ENCODE measurements at regions of chr19 and their contacts with region 1.

Region 1: DNA sequence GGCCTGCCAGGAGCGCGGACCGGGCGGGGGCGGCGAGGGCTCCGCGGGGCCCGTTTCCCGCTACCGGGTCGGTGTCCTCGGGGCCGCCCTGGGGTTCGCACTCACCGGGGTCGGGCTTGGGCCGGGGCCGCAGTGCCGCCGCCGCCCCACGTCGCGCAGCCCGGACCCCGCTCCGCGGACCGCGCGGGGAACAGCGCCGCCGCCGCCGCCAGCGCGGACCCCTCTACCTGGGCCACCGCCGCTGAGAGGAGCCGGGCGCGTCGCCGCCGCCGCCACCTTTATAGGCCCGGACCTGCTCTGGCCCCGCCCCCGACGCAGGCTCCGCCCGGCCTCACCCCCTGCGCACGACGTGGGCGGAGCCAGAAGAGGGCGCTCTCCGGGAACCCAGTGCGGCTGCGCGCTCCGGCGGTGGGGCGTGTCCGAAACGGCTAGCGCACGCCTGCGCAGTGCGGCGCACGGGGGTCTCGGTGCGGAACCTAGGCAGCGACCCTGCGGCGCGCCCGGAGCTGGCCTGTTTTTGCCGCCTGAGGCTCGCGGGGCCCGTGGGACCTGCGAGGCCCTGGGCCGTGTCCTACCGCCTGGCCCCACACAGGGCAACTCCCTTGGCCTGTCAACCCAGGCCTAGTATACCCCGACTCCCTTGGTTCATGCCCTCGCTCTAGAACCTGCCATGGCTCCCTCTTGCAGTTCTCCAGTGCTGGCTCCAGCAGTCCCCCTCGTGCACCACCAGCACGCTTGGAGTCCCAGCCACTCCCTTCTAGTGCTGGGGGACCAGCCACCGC is at the start of gene MKNK2:
- DNase-seq: peak; percentile 64
- ATAC-seq: peak; percentile 47
- H3K4me3 ChIP-seq: peak within 1 kb of the TSS; percentile 92 to 94 (median 93)
- H3K27ac ChIP-seq: peak within 1 kb of the TSS; percentile 63
- H3K4me1 ChIP-seq: peaks cover 79% of the 10 kb centered on the region
- H3K27me3 ChIP-seq: no peaks in the 10 kb centered on the region
- CTCF ChIP-seq: peak; percentile 88
- EP300 ChIP-seq: no peak
- POLR2A ChIP-seq: peak; percentile 95 to 98
- RAD21 ChIP-seq: peak; percentile 71
- total RNA-seq, gene MKNK2: 35.5 and 44.9 TPM in 2 replicates

Region 2: GRCh38 chr19:2032296-2032941 is 18.8 kb before region 1 on chr19:
- CTCF ChIA-PET with region 1: no interaction called
- POLR2A ChIA-PET with region 1: interaction called, 11 read pairs
- in situ Hi-C with region 1: no loop called
- intact Hi-C with region 1: no loop called
- DNase-seq: no peak
- ATAC-seq: peak; percentile 20; the same call in 2 of the 3 replicates
- H3K4me3 ChIP-seq: peak overlapping the region in 2 of 3 experiments; percentile 26 to 44; a peak in 1 of 6 replicates
- H3K27ac ChIP-seq: no peak overlapping the region
- H3K4me1 ChIP-seq: peaks cover 14% of the 10 kb centered on the region
- H3K27me3 ChIP-seq: peaks cover 0 to 9% of the 10 kb centered on the region in 2 experiments; a peak in 2 of 5 replicates
- CTCF ChIP-seq: no peak
- EP300 ChIP-seq: no peak
- POLR2A ChIP-seq: no peak
- RAD21 ChIP-seq: no peak

Region 3: GRCh38 chr19:2076526-2076981 is 25.4 kb after region 1 on chr19:
- CTCF ChIA-PET with region 1: no interaction called
- POLR2A ChIA-PET with region 1: no interaction called
- in situ Hi-C with region 1: no loop called
- intact Hi-C with region 1: no loop called
- DNase-seq: no peak
- ATAC-seq: no peak
- H3K4me3 ChIP-seq: no peak overlapping the region
- H3K27ac ChIP-seq: no peak overlapping the region
- H3K4me1 ChIP-seq: no peaks in the 10 kb centered on the region
- H3K27me3 ChIP-seq: no peaks in the 10 kb centered on the region
- CTCF ChIP-seq: no peak
- EP300 ChIP-seq: no peak
- POLR2A ChIP-seq: no peak
- RAD21 ChIP-seq: no peak

Region 4: DNA sequence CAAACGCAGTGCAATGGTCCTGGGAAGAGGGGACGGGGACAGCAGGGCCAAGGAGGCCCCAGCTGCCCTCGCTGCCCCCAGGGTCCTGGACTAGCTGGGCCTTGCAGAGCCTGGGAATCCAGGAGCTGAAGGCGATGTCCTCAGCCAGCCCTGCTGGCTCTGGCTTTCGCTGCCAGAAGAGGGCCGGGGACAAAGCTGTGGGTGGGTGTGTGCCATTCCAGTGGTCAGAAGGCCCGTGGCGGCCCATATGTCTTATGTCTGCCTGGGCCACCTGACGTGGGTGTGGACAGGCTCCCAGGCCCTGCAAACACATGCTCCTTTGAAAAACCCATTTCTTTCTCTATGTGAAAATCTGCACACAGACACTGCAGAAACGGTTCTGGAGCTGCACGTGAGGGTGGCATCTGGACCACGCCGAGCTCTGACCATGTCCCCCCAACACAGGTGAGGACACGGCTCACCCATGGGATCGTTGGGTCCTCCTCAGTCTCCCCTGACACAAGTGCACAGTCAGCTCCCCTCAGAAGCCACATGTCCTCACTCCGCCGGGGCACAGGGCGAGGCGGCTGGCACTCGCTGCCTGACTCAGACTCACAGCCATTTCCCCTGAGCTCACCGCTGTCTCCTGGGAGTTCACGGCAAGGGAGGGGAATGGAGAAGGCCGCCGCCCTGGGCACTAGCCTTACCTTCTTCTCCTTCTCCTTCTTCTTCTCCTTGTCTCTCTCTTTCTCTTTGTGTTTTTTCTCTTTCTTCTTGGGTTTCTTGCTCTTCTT is 62.4 kb after region 1 on chr19:
- CTCF ChIA-PET with region 1: no interaction called
- POLR2A ChIA-PET with region 1: no interaction called
- in situ Hi-C with region 1: no loop called
- intact Hi-C with region 1: no loop called
- DNase-seq: no peak
- ATAC-seq: no peak
- H3K4me3 ChIP-seq: no peak overlapping the region
- H3K27ac ChIP-seq: no peak overlapping the region
- H3K4me1 ChIP-seq: no peaks in the 10 kb centered on the region
- H3K27me3 ChIP-seq: no peaks in the 10 kb centered on the region
- CTCF ChIP-seq: no peak
- EP300 ChIP-seq: no peak
- POLR2A ChIP-seq: no peak
- RAD21 ChIP-seq: no peak

Measured in HepG2 (cell line).